ENCODE measurements at regions of chr3 and their contacts with region 1.

Region 1: DNA sequence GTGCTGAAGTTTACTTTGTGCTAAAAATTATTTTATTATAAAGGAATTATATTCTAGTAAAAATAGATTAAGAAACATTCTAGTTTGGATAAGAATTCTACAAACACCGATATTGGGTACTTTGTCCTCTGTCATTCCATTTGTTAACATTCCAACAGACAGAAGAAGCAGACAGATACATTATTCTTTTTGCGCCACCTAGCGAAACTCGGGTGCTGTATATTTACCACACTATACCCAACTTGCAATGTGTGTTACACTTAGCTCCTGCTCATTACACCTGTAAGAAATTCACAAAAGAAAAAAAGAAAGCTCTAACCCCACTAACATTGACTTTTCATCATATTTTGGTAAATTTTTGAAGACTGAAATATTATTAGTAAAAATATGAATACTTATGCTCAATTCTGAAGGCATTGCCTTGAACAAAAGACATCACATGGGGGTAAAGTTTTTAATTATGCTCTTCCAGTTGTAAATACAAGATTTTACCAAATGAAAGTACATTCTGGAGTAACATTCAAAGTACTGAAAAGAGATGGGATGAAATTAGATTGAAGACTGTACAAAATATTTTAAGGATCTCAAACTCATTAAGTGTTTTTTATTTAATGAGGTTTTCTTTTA is 136.5 kb upstream of the MLF1 start:
- DNase-seq: peak; percentile 48 to 58
- H3K4me3 ChIP-seq: no peak overlapping the region
- H3K27ac ChIP-seq: no peak overlapping the region
- H3K4me1 ChIP-seq: no peaks in the 10 kb centered on the region
- H3K27me3 ChIP-seq: no peaks in the 10 kb centered on the region
- CTCF ChIP-seq: peak; percentile 28 to 73 (median 60)
- POLR2A ChIP-seq: no peak

Region 2: DNA sequence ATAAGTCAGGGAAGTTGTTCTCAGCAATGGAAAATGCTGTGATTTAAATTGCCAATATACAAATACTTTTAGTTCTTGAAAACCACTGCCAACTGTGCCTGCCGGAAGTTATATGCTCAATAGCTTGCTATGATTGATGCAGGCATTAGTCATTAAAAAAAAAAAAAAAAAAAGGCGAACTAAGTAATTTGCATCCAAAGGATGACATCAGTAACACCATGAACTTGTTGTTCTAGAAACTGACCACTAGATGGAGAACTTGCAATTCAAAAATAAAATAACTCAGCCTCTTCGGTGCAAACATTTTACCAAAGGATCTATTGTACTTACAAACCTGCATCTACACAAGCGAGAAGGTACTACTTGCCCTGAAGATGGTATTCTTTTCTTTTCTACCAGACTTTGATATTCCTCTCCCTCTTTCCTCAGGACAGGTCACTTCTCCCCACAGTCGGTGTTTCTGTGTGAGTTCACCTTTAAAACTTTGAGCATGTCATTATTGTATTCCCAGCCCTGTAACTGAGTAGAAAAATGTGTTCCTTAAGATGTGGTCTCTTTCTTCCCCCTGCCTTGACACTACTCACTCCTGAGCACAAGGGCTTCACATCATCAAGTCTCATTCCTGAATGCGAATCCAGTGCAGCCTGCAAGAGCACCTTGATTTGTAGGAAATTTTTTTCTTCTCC is 816.3 kb before region 1 on chr3:
- intact Hi-C with region 1: loop called (anchors 10 kb)
- DNase-seq: no peak
- H3K4me3 ChIP-seq: no peak overlapping the region
- H3K27ac ChIP-seq: no peak overlapping the region
- H3K4me1 ChIP-seq: no peaks in the 10 kb centered on the region
- H3K27me3 ChIP-seq: no peaks in the 10 kb centered on the region
- CTCF ChIP-seq: peak in 5 of 6 experiments; percentile 28 to 68 (median 63)
- POLR2A ChIP-seq: no peak

Region 3: GRCh38 chr3:157913741-157914150 is 520.8 kb before region 1 on chr3:
- intact Hi-C with region 1: no loop called
- DNase-seq: no peak
- H3K4me3 ChIP-seq: no peak overlapping the region
- H3K27ac ChIP-seq: no peak overlapping the region
- H3K4me1 ChIP-seq: no peaks in the 10 kb centered on the region
- H3K27me3 ChIP-seq: no peaks in the 10 kb centered on the region
- CTCF ChIP-seq: no peak
- POLR2A ChIP-seq: no peak

Region 4: GRCh38 chr3:158313338-158313927 is 121.1 kb before region 1 on chr3:
- intact Hi-C with region 1: no loop called
- DNase-seq: no peak
- H3K4me3 ChIP-seq: no peak overlapping the region
- H3K27ac ChIP-seq: no peak overlapping the region
- H3K4me1 ChIP-seq: no peaks in the 10 kb centered on the region
- H3K27me3 ChIP-seq: no peaks in the 10 kb centered on the region
- CTCF ChIP-seq: no peak
- POLR2A ChIP-seq: no peak

Measured in thyroid gland (tissue), 4 donors.